B cell (primary cell): ENCODE measurements at regions of chr19 and their contacts with region 1.

Region 1: GRCh38 chr19:35545001-35545911 is at the start of gene TMEM147:
- DNase-seq: peak; percentile 87
- ATAC-seq: peak; percentile 92
- H3K4me3 ChIP-seq: peak within 1 kb of the TSS; percentile 45 to 97 (median 86)
- H3K4me3 Mint-ChIP-seq: peak within 1 kb of the TSS; percentile 91
- H3K27ac ChIP-seq: peak within 1 kb of the TSS; percentile 87 to 92
- H3K27ac Mint-ChIP-seq: peak within 1 kb of the TSS; percentile 89
- H3K4me1 ChIP-seq: peaks cover 16 to 34% of the 10 kb centered on the region in 2 donors
- H3K4me1 Mint-ChIP-seq: peaks cover 37% of the 10 kb centered on the region
- H3K27me3 ChIP-seq: no peaks in the 10 kb centered on the region
- H3K27me3 Mint-ChIP-seq: no peaks in the 10 kb centered on the region
- CTCF ChIP-seq: no peak
- total RNA-seq, gene TMEM147: 39.8 and 41.6 TPM in 2 replicates

Region 2: GRCh38 chr19:35468637-35469036 is 76.6 kb before region 1 on chr19:
- CTCF ChIA-PET with region 1: no interaction called
- POLR2A ChIA-PET with region 1: no interaction called
- intact Hi-C with region 1: no loop called
- DNase-seq: peak; percentile 84
- ATAC-seq: peak; percentile 100
- H3K4me3 ChIP-seq: no peak overlapping the region
- H3K4me3 Mint-ChIP-seq: no peak overlapping the region
- H3K27ac ChIP-seq: no peak overlapping the region
- H3K27ac Mint-ChIP-seq: peak overlapping the region; percentile 23
- H3K4me1 ChIP-seq: peaks cover 2 to 12% of the 10 kb centered on the region in 2 donors
- H3K4me1 Mint-ChIP-seq: peaks cover 10% of the 10 kb centered on the region
- H3K27me3 ChIP-seq: no peaks in the 10 kb centered on the region
- H3K27me3 Mint-ChIP-seq: no peaks in the 10 kb centered on the region
- CTCF ChIP-seq: peak; percentile 84

Region 3: DNA sequence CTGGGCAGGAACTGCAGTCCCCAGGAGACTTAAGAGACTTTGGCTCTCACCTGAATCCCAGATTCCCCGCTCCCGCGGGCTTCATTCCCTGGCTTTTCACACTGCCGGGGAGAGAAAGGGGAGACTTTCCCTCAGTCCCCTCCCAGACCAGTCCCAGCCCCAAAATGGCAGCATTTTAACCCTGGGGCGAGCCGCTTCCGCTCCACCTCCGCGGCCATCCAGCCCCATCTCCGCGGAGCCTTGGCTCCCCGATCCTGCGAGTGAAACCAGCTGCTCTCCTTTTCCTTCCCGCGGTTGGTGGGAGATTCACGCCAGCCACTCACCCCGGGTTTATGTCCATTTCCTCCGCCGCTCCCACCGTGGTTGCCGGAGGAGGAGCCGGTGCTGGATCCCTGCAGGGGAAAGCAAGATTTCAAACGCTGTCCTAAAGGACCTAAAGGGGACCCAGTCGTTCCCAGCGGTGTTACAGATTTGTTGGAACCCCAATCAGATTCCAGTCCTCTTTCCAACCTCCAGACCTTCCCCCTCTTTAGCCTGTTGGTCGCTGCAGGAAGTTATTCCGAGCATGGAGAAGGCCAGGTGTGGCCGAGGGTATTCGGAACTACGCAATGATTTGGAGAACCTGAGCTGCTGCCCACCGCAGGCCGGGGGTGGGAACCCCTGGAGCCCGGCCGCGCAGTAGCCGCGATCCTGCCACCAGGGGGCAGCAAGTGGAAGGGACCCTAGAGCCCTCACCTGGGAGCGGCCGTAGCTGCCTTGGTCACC is 35.2 kb before region 1 on chr19:
- CTCF ChIA-PET with region 1: interaction called, 10 read pairs
- POLR2A ChIA-PET with region 1: no interaction called
- intact Hi-C with region 1: no loop called
- DNase-seq: peak; percentile 84
- ATAC-seq: peak; percentile 86
- H3K4me3 ChIP-seq: peak overlapping the region in 4 of 5 experiments; percentile 6 to 62 (median 37)
- H3K4me3 Mint-ChIP-seq: peak overlapping the region; percentile 76
- H3K27ac ChIP-seq: no peak overlapping the region
- H3K27ac Mint-ChIP-seq: peak overlapping the region; percentile 59
- H3K4me1 ChIP-seq: peaks cover 19 to 21% of the 10 kb centered on the region in 2 donors
- H3K4me1 Mint-ChIP-seq: peaks cover 19% of the 10 kb centered on the region
- H3K27me3 ChIP-seq: peaks cover 0 to 71% (median 11%) of the 10 kb centered on the region in 4 experiments
- H3K27me3 Mint-ChIP-seq: peaks cover 59% of the 10 kb centered on the region
- CTCF ChIP-seq: peak; percentile 96

Region 4: DNA sequence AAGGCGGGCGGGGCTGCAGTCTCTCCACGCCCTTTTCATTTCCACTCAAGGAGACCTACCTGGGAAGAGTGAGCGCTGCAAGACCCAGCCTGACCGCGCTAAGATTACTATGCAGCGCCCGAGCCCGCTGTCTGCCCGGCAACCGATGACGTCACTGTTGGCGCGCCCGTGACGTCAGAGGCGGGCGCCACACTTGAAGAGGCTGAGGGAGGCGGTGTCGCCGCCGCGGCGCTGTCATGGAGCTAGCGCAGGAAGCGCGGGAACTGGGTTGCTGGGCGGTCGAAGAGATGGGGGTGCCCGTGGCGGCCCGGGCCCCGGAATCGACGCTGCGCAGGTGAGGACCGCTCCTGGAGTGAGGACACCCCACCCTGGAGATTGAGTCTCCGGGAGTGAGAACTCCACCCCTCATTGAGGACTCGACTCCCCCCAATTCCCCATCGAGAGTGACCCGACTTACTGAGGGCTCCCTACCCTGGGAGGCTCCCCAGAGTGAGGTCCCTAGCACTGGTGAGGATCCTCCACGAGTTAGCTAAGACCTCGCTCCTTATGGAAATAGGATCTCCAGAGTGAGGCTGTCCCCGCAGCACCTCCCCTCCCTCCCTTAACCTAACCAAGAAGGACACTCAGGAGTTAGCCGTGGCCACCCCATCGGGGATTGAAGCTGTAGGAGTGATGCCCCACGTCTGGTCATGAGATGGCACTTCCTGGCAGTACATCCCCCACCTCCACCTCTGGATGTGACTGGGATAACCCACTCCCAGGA is 67.5 kb after region 1 on chr19 and contains the start of gene HAUS5:
- CTCF ChIA-PET with region 1: interaction called, 3 read pairs
- POLR2A ChIA-PET with region 1: interaction called, 12 read pairs
- intact Hi-C with region 1: loop called (anchors 1 kb)
- DNase-seq: peak; percentile 97
- ATAC-seq: peak; percentile 79
- H3K4me3 ChIP-seq: peak within 1 kb of the TSS; percentile 37 to 87 (median 78)
- H3K4me3 Mint-ChIP-seq: peak within 1 kb of the TSS; percentile 92
- H3K27ac ChIP-seq: peak within 1 kb of the TSS; percentile 76 to 77
- H3K27ac Mint-ChIP-seq: peak within 1 kb of the TSS; percentile 98
- H3K4me1 ChIP-seq: peaks cover 38 to 53% of the 10 kb centered on the region in 2 donors
- H3K4me1 Mint-ChIP-seq: peaks cover 42% of the 10 kb centered on the region
- H3K27me3 ChIP-seq: no peaks in the 10 kb centered on the region
- H3K27me3 Mint-ChIP-seq: no peaks in the 10 kb centered on the region
- CTCF ChIP-seq: no peak
- total RNA-seq, gene HAUS5: 32.2 and 35.3 TPM in 2 replicates

Region 5: GRCh38 chr19:35628565-35629331 is 83.5 kb after region 1 on chr19 and contains the start of gene RBM42:
- CTCF ChIA-PET with region 1: no interaction called
- POLR2A ChIA-PET with region 1: no interaction called
- intact Hi-C with region 1: loop called (anchors 1 kb)
- DNase-seq: peak; percentile 98
- ATAC-seq: peak; percentile 99
- H3K4me3 ChIP-seq: peak within 1 kb of the TSS; percentile 81 to 98 (median 85)
- H3K4me3 Mint-ChIP-seq: peak within 1 kb of the TSS; percentile 99
- H3K27ac ChIP-seq: peak within 1 kb of the TSS; percentile 80 to 89
- H3K27ac Mint-ChIP-seq: peak within 1 kb of the TSS; percentile 99
- H3K4me1 ChIP-seq: peaks cover 8 to 17% of the 10 kb centered on the region in 2 donors
- H3K4me1 Mint-ChIP-seq: peaks cover 25% of the 10 kb centered on the region
- H3K27me3 ChIP-seq: no peaks in the 10 kb centered on the region
- H3K27me3 Mint-ChIP-seq: no peaks in the 10 kb centered on the region
- CTCF ChIP-seq: no peak
- total RNA-seq, gene RBM42: 52.0 and 52.7 TPM in 2 replicates

Region 6: DNA sequence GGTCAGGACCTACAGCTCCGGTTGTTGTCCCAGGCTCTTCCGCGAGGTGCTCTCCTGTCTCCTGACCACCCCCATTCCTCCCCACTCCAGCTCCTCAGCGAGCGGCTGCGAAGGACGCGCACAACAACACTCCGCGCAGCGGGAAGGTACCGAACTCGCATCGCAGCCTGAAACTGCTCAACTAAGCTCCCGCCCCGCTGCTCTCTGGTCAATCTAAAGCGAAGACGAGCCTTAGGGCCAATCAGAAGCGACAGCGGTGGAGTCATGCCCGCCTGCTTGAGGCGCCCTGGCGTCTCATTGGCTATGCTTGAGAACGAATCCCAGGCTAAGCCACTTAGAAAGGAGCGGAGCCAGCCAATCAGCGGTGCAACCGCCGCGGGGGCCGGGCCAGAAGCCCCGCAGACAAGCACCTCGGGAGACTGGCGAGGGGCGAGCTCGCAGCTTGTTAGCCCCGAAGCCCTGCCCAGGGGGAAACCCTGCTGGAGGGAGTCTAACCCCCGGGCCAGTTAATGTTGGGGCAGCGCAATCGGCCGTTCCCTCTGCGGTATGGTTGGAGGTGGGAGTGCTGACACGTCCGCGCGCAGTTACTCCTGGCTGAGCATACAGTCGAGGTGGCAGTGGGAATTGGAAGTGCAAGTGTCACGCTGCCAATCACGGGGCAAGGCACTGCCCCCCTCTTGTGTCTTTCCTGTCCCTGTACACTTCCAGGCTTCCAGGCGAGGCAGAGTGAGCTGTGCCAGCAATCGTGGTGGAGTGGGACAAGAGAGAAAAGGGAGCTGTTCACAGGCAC is 157.2 kb after region 1 on chr19:
- CTCF ChIA-PET with region 1: no interaction called
- POLR2A ChIA-PET with region 1: no interaction called
- intact Hi-C with region 1: loop called (anchors 5 kb)
- DNase-seq: peak; percentile 96
- ATAC-seq: peak; percentile 99
- H3K4me3 ChIP-seq: peak overlapping the region in 4 of 5 experiments; percentile 61 to 86 (median 74)
- H3K4me3 Mint-ChIP-seq: peak overlapping the region; percentile 98
- H3K27ac ChIP-seq: peak overlapping the region; percentile 59 to 74
- H3K27ac Mint-ChIP-seq: peak overlapping the region; percentile 98
- H3K4me1 ChIP-seq: peaks cover 0 to 19% of the 10 kb centered on the region in 2 donors
- H3K4me1 Mint-ChIP-seq: peaks cover 8% of the 10 kb centered on the region
- H3K27me3 ChIP-seq: no peaks in the 10 kb centered on the region
- H3K27me3 Mint-ChIP-seq: no peaks in the 10 kb centered on the region
- CTCF ChIP-seq: no peak